Activated T-helper 2 cell treated with anti-CD3 and anti-CD28 coated beads, Interferon-gamma antibody, Interleukin-2, Interleukin-4, amounts not matched to agents 10 μg/mL and 5 μg/mL and 100 μg/mL, durations not matched to agents 14 hours and 24 hours and 36 hours (primary cell): ENCODE measurements at regions of chr3 and their contacts with region 1.

Region 1: DNA sequence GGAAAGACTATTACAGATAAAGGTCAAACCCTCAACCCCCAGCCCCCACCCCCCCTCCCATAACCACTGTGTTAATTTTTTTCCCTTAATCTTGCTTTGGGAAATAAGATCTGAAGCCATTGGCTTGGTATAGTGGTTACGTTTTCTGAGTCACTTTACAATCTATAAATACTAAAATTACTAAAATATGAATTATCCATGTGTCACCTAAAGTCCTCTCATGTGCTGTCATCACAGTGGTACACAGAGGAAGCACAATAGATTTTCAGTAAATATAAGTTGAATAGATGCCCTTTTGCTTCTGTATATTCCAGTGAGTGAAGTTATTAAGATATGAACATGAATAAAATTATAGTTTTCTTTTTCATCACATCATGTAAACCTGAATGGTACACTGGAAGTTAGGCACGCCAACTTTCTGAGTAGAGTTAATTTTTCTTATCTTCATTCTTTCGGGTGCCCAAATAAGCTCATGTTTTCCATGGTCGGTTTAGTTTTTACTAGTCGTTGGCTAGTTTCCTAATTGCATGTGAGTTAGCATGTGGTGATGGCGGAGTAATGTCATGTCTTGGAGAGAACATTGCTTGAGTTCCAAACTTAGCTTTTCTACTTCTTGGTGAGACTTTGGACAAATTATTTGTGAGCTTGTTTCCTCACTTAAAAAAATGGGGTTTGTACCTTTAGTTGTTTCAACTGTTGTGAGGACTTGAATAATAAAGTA is 11.5 kb downstream of the PPP4R2 start:
- DNase-seq: no peak
- H3K4me3 Mint-ChIP-seq: no peak overlapping the region
- H3K27ac Mint-ChIP-seq: peak overlapping the region; percentile 72
- H3K4me1 Mint-ChIP-seq: peaks cover 59% of the 10 kb centered on the region
- H3K27me3 Mint-ChIP-seq: no peaks in the 10 kb centered on the region

Region 2: GRCh38 chr3:72738752-72739530 is 269.2 kb before region 1 on chr3:
- intact Hi-C with region 1: no loop called
- DNase-seq: peak; percentile 61
- H3K4me3 Mint-ChIP-seq: peak overlapping the region; percentile 83
- H3K27ac Mint-ChIP-seq: peak overlapping the region; percentile 79
- H3K4me1 Mint-ChIP-seq: peaks cover 19% of the 10 kb centered on the region
- H3K27me3 Mint-ChIP-seq: no peaks in the 10 kb centered on the region

Region 3: DNA sequence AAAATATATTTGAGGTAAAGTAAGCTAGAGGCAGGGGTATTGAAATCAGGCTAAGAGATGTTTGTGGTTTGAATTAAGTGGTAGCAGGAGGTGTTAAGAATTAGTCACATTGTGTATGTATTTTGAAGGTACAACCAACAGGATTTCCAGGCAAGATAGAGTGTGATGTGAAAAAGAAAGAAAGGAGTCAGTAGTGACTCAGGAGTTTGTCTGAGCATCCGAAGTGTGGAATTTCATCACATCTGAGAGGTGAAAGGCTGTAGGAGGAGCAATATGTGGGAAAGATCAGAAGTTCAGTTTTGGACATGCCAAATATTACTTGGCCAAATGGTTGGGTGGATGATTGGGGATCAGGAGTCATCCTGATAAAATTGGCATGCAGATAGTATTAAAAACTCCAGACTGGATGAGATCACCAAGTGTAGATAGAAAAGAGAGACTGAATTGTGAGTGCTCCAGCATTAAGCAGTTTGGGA is 21.2 kb after region 1 on chr3:
- intact Hi-C with region 1: loop called (anchors 1 kb)
- DNase-seq: no peak
- H3K4me3 Mint-ChIP-seq: peak overlapping the region; percentile 7
- H3K27ac Mint-ChIP-seq: peak overlapping the region; percentile 61
- H3K4me1 Mint-ChIP-seq: peaks cover 62% of the 10 kb centered on the region
- H3K27me3 Mint-ChIP-seq: no peaks in the 10 kb centered on the region

Region 4: GRCh38 chr3:73228437-73228836 is 220.3 kb after region 1 on chr3:
- intact Hi-C with region 1: no loop called
- DNase-seq: no peak
- H3K4me3 Mint-ChIP-seq: no peak overlapping the region
- H3K27ac Mint-ChIP-seq: no peak overlapping the region
- H3K4me1 Mint-ChIP-seq: no peaks in the 10 kb centered on the region
- H3K27me3 Mint-ChIP-seq: no peaks in the 10 kb centered on the region